Calu3 (cell line): ENCODE measurements at regions of chr5 and their contacts with region 1.

Region 1: GRCh38 chr5:170747851-170748250 is 35.7 kb upstream of the GABRP start:
- DNase-seq: peak; percentile 80
- H3K4me3 Mint-ChIP-seq: no peak overlapping the region
- H3K27ac Mint-ChIP-seq: peak overlapping the region; percentile 99
- H3K4me1 Mint-ChIP-seq: peaks cover 84% of the 10 kb centered on the region
- H3K27me3 Mint-ChIP-seq: no peaks in the 10 kb centered on the region
- CTCF ChIP-seq: peak; percentile 77

Region 2: DNA sequence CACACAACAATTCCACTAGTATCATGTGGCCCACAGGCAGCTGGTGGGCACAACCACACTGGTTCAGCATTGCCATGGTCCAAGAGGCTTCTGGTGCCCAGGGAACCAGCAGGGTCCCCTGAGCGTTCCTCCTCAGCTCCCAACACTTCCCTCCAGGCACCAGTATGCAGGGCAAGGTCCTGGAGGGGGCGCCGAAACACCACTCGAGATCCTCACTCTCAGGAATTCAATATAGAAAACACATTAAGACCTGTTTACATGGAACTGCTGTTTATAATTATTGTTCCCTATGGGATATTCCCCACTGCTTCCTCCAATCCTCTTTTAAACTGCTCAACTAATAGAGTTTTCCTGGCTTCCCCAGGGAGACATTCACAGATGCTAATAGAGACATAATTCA is 56.2 kb before region 1 on chr5:
- CTCF ChIA-PET with region 1: interaction called, 10 read pairs
- intact Hi-C with region 1: no loop called
- DNase-seq: peak; percentile 51
- H3K4me3 Mint-ChIP-seq: no peak overlapping the region
- H3K27ac Mint-ChIP-seq: no peak overlapping the region
- H3K4me1 Mint-ChIP-seq: no peaks in the 10 kb centered on the region
- H3K27me3 Mint-ChIP-seq: peaks cover 94% of the 10 kb centered on the region
- CTCF ChIP-seq: peak; percentile 16

Region 3: GRCh38 chr5:170782438-170782837 is 34.6 kb after region 1 on chr5:
- CTCF ChIA-PET with region 1: interaction called, 28 read pairs
- intact Hi-C with region 1: loop called (anchors 1 kb)
- DNase-seq: peak; percentile 91
- H3K4me3 Mint-ChIP-seq: peak overlapping the region; percentile 99
- H3K27ac Mint-ChIP-seq: peak overlapping the region; percentile 81
- H3K4me1 Mint-ChIP-seq: peaks cover 65% of the 10 kb centered on the region
- H3K27me3 Mint-ChIP-seq: no peaks in the 10 kb centered on the region
- CTCF ChIP-seq: no peak

Region 4: DNA sequence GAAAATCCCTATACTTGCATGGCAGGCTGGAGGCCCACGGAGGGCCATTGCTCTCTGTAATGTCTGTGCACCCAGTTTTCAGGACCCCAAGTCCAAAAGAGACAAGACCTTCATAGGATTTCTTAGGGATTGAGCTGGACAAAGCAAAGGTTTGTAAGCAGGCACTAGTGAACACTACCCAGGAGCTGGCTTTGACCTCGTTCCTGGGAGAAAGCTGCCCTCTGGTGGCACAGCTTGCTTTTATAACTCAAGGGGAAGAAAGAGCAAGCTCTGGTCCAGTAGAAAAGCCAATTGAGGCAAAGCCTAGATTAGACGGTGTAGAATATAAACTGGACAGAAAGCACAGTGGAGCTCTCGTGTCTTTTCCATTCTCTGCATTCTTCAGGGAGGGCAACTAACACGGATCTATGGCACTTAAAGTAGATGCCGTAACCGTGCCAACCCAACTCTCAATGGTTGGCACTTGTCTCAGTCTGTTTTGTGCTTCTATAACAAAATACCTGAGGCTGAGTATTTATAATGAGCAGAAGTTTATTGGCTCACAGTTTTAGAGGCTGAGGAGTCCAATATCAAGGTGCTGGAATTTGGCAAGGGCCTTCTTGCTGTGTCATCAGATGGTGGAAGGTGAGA is 43.6 kb after region 1 on chr5:
- CTCF ChIA-PET with region 1: interaction called, 115 read pairs
- intact Hi-C with region 1: loop called (anchors 1 kb)
- DNase-seq: peak; percentile 84
- H3K4me3 Mint-ChIP-seq: peak overlapping the region; percentile 10
- H3K27ac Mint-ChIP-seq: peak overlapping the region; percentile 84
- H3K4me1 Mint-ChIP-seq: peaks cover 60% of the 10 kb centered on the region
- H3K27me3 Mint-ChIP-seq: no peaks in the 10 kb centered on the region
- CTCF ChIP-seq: peak; percentile 83

Region 5: DNA sequence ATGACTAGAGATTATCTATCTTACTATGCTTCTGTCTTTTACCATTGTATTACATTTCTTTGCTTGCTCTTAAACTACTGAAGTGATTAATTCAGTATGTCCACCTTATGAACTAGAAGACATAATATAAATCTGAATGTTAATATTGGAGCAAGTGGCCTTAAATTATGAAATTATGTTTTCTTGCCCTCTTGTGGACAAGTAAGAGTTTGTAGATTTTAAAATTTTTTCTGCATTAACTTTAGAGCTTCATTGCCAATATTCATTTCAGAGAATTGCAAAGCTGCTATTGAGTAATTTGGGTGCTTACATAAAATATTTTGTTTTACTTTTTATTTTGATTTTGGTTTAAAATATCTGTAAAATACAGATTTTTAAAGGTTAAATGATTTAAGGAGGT is 169.3 kb after region 1 on chr5:
- CTCF ChIA-PET with region 1: interaction called, 13 read pairs
- intact Hi-C with region 1: loop called (anchors 1 kb)
- DNase-seq: no peak
- H3K4me3 Mint-ChIP-seq: no peak overlapping the region
- H3K27ac Mint-ChIP-seq: peak overlapping the region; percentile 18
- H3K4me1 Mint-ChIP-seq: no peaks in the 10 kb centered on the region
- H3K27me3 Mint-ChIP-seq: no peaks in the 10 kb centered on the region
- CTCF ChIP-seq: no peak